Endothelial cell of umbilical vein (primary cell): ENCODE measurements at regions of chr10 and their contacts with region 1.

Region 1: DNA sequence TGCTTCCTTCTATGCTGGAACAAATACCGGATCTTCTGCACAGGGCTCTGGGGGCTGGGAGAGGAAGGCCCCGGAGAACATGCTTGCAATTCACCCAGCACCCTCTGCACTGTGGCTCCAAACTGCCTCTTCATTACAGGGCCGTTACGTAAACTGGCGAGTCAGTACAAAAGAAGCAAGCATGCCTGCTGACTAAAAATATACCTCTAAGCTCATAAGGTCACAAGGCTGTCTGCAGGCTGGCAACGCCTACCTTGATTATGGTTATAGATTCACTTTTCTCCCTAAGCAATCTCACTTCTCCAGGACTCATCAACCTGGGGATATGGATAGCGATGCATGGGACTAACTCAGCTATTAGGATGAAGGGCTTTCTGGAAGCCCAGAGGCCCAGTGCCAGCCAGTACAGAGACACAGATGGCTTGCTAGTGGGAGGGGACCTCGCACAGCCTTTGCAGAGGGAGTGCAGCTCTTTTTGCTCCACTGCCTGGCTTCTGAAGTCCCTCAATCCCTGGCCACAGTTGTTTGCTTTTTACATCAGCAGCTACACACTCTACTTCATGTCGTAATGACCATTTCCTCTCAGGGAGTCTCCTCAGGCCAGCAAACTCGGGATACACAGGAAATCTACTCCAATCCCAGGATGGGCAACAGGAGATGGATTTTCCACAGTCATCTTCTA is 96.1 kb downstream of the SH3PXD2A start:
- DNase-seq: peak; percentile 78
- H3K4me3 ChIP-seq: no peak overlapping the region
- H3K27ac ChIP-seq: peak overlapping the region; percentile 59
- H3K4me1 ChIP-seq: peaks cover 60% of the 10 kb centered on the region
- H3K27me3 ChIP-seq: no peaks in the 10 kb centered on the region
- CTCF ChIP-seq: no peak
- POLR2A ChIP-seq: no peak

Region 2: DNA sequence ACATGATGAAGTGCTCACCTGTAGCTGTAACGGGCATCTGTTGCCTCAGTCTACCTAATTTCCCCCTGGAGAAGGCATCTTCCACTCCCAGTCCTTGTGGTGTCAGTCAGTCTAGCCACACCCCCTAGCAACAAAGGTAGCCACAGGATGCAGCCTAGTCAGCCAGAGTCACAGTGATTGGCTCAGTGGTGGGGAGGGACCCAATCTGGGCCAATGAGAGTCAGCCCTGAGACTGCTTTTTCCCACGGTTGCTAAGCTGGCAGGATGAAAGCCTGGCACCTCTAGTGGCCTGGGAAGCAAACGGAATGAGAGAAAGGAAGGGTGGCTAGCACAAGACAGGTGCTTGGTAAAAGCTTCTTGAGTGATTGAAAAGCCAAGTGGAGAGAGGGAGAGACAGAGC is 22.5 kb before region 1 on chr10:
- CTCF ChIA-PET with region 1: interaction called, 12 read pairs
- POLR2A ChIA-PET with region 1: no interaction called
- dilution Hi-C with region 1: no loop called
- intact Hi-C with region 1: no loop called
- DNase-seq: peak; percentile 30
- H3K4me3 ChIP-seq: no peak overlapping the region
- H3K27ac ChIP-seq: no peak overlapping the region
- H3K4me1 ChIP-seq: peaks cover 18% of the 10 kb centered on the region
- H3K27me3 ChIP-seq: no peaks in the 10 kb centered on the region
- CTCF ChIP-seq: no peak
- POLR2A ChIP-seq: no peak

Region 3: DNA sequence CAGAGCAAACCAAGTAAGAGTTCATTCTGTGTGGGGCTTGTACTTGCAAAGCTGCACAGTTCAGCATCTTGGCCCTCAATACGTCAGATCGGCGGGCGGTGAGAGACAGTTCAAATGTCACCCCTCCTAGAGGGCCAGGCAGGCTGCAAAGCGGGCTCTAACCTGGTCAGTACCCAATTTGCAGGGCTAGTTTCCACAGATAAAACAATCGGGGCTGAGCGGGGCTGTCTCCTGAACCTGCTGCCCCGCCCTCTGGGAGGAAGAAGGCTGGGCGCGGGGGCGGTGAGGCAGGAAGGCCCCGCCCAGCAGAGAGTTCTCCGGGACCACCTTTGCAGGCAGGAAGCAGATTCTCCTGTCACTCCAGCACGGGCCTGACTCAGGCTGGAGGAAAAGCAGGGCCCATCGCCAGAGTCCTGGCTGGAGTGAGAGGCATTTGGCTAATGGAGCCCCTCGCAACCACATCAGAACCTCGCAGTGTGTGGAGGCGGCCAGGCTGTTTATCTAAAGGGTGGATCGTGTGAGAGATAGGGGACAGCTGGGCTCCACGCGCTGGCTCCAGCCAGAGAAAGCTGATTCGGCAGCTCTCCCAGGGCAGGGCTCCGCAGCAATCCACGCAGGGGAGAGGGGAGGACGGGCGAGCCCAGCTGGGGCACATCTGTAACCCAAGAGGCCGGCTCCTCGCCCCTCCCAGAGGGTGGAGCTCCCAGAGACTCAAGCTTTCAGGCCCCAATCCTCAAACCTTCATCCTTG is 13.0 kb after region 1 on chr10:
- CTCF ChIA-PET with region 1: interaction called, 11 read pairs
- POLR2A ChIA-PET with region 1: no interaction called
- dilution Hi-C with region 1: no loop called
- intact Hi-C with region 1: loop called (anchors 2 kb)
- DNase-seq: peak; percentile 51
- H3K4me3 ChIP-seq: peak overlapping the region in 2 of 3 experiments; percentile 0 to 14
- H3K27ac ChIP-seq: no peak overlapping the region
- H3K4me1 ChIP-seq: peaks cover 7% of the 10 kb centered on the region
- H3K27me3 ChIP-seq: no peaks in the 10 kb centered on the region
- CTCF ChIP-seq: no peak
- POLR2A ChIP-seq: no peak

Region 4: GRCh38 chr10:103852189-103852711 is 93.0 kb after region 1 on chr10:
- CTCF ChIA-PET with region 1: interaction called, 30 read pairs
- POLR2A ChIA-PET with region 1: no interaction called
- dilution Hi-C with region 1: no loop called
- intact Hi-C with region 1: no loop called
- DNase-seq: no peak
- H3K4me3 ChIP-seq: no peak overlapping the region
- H3K27ac ChIP-seq: no peak overlapping the region
- H3K4me1 ChIP-seq: peaks cover 45% of the 10 kb centered on the region
- H3K27me3 ChIP-seq: no peaks in the 10 kb centered on the region
- CTCF ChIP-seq: no peak
- POLR2A ChIP-seq: no peak